GM12878 (cell line): ENCODE measurements at regions of chr2 and their contacts with region 1.

Region 1: DNA sequence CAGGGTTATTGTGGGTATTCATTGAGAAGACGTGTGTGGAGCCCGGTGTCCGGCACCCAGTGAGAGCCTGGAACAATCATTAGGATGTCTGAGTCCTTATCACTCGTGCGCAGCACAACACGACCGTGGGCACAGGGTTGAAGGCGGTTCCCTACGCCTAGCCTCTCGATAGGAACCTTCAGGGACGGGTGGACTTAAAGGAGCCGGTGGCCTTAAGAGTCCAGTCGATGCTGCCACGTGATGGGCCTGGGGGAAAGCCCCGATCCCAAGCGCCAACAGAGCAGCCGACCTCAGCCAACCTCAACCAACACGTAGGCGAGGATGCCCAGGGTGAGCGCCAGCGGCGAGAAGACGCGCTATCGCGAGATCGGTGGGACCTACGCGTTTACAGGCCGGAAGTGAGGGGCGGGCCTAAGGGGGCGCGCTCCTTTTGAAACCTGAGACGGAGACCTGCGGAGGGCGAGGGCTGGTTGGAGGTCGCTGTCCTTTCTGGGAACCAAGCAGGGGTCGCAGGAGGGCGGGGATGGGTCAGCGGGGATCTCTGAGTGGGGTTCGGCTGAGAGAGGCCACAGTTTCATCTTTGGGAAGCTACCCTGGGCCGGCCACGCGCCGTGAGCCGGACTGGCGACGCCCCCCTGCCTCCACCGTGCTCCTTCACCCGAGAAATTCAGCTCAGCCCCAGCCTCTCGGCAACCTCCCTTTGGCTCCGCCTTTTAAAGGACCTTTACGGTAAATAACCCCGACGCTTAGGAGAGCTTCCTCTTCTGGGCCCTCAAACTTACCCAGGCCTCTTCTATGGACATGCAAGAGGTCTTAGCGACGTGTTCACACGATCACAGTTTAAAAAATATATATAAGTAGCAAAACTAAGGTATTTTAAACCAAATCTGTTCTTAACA is 28.3 kb downstream of the WNT10A start:
- DNase-seq: peak; percentile 89
- ATAC-seq: peak; percentile 97
- H3K4me3 ChIP-seq: peak overlapping the region; percentile 73
- H3K27ac ChIP-seq: peak overlapping the region; percentile 63
- H3K4me1 ChIP-seq: peaks cover 8% of the 10 kb centered on the region
- H3K27me3 ChIP-seq: no peaks in the 10 kb centered on the region
- CTCF ChIP-seq: no peak
- EP300 ChIP-seq: 0 out of 4 replicates have a peak, but pooled peaks of 1 of the 2 experiments have one; percentile 22
- POLR2A ChIP-seq: peak; percentile 70; the same call in 1 of the 2 replicates
- RAD21 ChIP-seq: no peak

Region 2: GRCh38 chr2:218798767-218799504 is 110.0 kb before region 1 on chr2:
- CTCF ChIA-PET with region 1: no interaction called
- POLR2A ChIA-PET with region 1: no interaction called
- RAD21 ChIA-PET with region 1: no interaction called
- SMC1A ChIA-PET with region 1: no interaction called
- in situ Hi-C with region 1: no loop called
- intact Hi-C with region 1: no loop called
- DNase-seq: no peak
- ATAC-seq: no peak
- H3K4me3 ChIP-seq: no peak overlapping the region
- H3K27ac ChIP-seq: no peak overlapping the region
- H3K4me1 ChIP-seq: no peaks in the 10 kb centered on the region
- H3K27me3 ChIP-seq: peaks cover 0 to 2% of the 10 kb centered on the region in 2 experiments; a peak in 2 of 4 replicates
- CTCF ChIP-seq: no peak
- EP300 ChIP-seq: no peak
- POLR2A ChIP-seq: no peak
- RAD21 ChIP-seq: no peak

Region 3: DNA sequence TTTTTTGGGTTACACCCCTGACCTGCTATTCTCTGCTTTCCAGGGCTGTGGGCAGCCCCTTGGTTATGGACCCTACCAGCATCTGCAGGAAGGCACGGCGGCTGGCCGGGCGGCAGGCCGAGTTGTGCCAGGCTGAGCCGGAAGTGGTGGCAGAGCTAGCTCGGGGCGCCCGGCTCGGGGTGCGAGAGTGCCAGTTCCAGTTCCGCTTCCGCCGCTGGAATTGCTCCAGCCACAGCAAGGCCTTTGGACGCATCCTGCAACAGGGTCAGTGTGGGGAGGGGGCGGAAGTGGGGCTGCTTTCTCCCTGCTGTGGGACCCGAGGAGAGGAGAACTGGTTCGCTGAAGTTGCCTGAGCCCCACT is 38.0 kb before region 1 on chr2:
- CTCF ChIA-PET with region 1: interaction called, 1,364 read pairs
- POLR2A ChIA-PET with region 1: interaction called, 10 read pairs
- RAD21 ChIA-PET with region 1: interaction called, 29 read pairs
- SMC1A ChIA-PET with region 1: interaction called, 57 read pairs
- in situ Hi-C with region 1: no loop called
- intact Hi-C with region 1: loop called (anchors 5 kb)
- DNase-seq: no peak
- ATAC-seq: no peak
- H3K4me3 ChIP-seq: no peak overlapping the region
- H3K27ac ChIP-seq: no peak overlapping the region
- H3K4me1 ChIP-seq: peaks cover 21% of the 10 kb centered on the region
- H3K27me3 ChIP-seq: peaks cover 13 to 30% of the 10 kb centered on the region in 2 experiments
- CTCF ChIP-seq: no peak
- EP300 ChIP-seq: no peak
- POLR2A ChIP-seq: no peak
- RAD21 ChIP-seq: no peak